H1 (cell line): ENCODE measurements at regions of chr3 and their contacts with region 1.

Region 1: DNA sequence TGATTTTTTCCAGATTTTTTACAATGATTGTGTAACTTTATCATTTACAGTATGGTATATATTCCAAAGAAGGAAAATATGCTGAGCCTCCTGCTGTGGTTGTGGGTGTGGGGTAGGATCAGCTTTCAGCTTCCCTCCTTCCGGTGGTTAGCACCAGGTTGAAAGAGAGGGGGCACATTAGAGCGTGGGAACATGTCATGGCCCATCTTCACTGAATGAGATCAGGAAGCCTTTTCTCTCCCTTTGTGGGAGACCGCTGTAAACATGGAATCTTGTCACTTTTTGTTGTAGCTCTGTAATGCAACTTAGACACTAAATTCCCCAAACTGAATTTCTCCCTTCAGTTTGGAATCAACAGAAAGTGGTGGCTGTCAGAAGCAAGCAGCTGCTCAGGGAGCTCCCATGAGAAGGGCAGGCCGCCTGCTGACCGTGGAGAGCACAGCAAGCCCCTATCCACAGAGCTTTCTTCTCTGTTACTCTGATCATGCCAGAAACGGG is 86.7 kb upstream of the LIMD1 start:
- DNase-seq: peak in 1 of 2 experiments; percentile 61
- H3K4me3 ChIP-seq: peak overlapping the region in 1 of 4 experiments; percentile 3; a peak in 1 of 8 replicates
- H3K27ac ChIP-seq: peak overlapping the region; percentile 37; the same call in 1 of the 2 replicates
- H3K4me1 ChIP-seq: peaks cover 11 to 32% (median 22%) of the 10 kb centered on the region in 4 experiments; a peak in 6 of 7 replicates
- H3K27me3 ChIP-seq: no peaks in the 10 kb centered on the region
- CTCF ChIP-seq: peak; percentile 39 to 55 (median 54)
- EP300 ChIP-seq: no peak
- POLR2A ChIP-seq: no peak
- RAD21 ChIP-seq: peak; percentile 22 to 47; a peak in 3 of 4 replicates

Region 2: DNA sequence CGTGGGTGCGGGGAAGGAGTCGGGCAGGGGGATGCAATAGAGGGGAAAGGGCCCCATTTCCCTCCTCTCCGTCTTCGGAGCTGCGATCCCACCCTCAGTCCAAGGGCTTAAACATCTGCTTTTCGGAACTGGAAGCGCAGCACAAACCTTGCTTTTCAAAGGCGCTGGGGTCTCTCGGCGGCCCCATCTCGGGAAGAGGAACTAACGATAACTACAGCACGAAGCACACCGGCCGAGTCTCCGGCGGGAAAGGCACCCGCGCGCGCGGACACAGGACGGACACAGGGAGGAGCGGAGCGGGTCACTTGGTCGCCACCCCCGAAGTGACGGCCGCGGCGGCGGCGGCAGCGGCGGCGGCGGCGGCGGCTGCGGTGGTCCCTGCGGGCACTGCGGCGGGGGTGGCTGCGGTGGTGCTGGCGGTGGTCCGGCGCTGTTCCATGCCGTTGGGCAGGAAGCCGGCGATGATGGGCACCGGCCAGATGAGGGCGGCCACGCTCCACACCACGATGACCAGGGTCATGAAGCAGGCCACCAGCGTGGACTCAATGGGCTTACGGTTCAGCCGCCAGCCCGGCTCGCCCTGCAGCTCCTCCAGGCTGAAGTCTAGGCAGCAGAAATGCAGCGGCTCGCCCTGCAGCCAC is 282.9 kb before region 1 on chr3:
- CTCF ChIA-PET with region 1: interaction called, 34 read pairs
- POLR2A ChIA-PET with region 1: interaction called, 3 read pairs
- DNase-seq: peak; percentile 31 to 81
- H3K4me3 ChIP-seq: peak overlapping the region; percentile 44 to 95 (median 76)
- H3K27ac ChIP-seq: no peak overlapping the region
- H3K4me1 ChIP-seq: peaks cover 1 to 15% (median 4%) of the 10 kb centered on the region in 4 experiments; a peak in 6 of 7 replicates
- H3K27me3 ChIP-seq: peaks cover 0 to 5% (median 0%) of the 10 kb centered on the region in 4 experiments; a peak in 2 of 7 replicates
- CTCF ChIP-seq: peak; percentile 77 to 90 (median 84)
- EP300 ChIP-seq: no peak
- POLR2A ChIP-seq: no peak
- RAD21 ChIP-seq: peak; percentile 89

Region 3: DNA sequence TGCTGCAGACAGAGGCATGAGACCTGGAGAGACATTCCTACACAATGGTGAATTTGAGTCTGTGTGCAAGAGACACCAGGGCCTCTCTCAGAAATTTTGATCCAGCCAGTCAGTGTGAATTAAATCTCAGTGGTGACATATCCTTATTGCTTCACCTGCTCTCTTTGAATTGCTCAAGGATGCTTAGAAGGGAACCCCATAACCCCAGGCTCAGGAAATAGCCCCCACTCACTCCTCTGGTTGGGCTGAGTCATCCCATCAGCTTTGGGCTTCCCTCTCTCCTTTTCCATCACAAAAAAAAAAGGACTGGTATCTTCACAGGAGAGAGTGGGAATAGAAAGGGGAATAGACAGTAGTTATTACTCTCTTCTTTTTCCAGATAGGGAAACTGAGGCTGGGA is 152.5 kb before region 1 on chr3:
- CTCF ChIA-PET with region 1: no interaction called
- POLR2A ChIA-PET with region 1: no interaction called
- DNase-seq: no peak
- H3K4me3 ChIP-seq: no peak overlapping the region
- H3K27ac ChIP-seq: no peak overlapping the region
- H3K4me1 ChIP-seq: no peaks in the 10 kb centered on the region
- H3K27me3 ChIP-seq: no peaks in the 10 kb centered on the region
- CTCF ChIP-seq: no peak
- EP300 ChIP-seq: no peak
- POLR2A ChIP-seq: no peak
- RAD21 ChIP-seq: no peak

Region 4: GRCh38 chr3:45453839-45454238 is 54.0 kb before region 1 on chr3:
- CTCF ChIA-PET with region 1: no interaction called
- POLR2A ChIA-PET with region 1: no interaction called
- DNase-seq: no peak
- H3K4me3 ChIP-seq: no peak overlapping the region
- H3K27ac ChIP-seq: no peak overlapping the region
- H3K4me1 ChIP-seq: no peaks in the 10 kb centered on the region
- H3K27me3 ChIP-seq: no peaks in the 10 kb centered on the region
- CTCF ChIP-seq: no peak
- EP300 ChIP-seq: no peak
- POLR2A ChIP-seq: no peak
- RAD21 ChIP-seq: no peak

Region 5: DNA sequence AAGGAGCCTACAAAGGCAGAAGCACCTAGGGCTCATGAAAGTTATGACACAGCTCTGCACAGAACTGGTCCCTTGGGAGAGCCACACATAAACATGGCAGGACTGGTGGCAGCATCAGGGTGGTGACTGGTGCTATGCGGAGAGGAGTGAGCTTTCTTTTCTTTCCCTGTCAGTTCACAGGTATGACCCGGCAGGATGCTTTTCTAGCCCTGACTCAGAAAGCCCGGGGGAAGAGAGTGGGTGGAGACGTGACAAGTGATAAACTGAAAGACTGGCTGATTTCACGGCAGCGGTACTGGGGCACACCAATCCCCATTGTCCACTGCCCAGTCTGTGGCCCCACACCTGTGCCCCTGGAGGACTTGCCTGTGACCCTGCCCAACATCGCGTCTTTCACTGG is 16.5 kb before region 1 on chr3:
- CTCF ChIA-PET with region 1: interaction called, 18 read pairs
- POLR2A ChIA-PET with region 1: no interaction called
- DNase-seq: no peak
- H3K4me3 ChIP-seq: no peak overlapping the region
- H3K27ac ChIP-seq: no peak overlapping the region
- H3K4me1 ChIP-seq: no peaks in the 10 kb centered on the region
- H3K27me3 ChIP-seq: no peaks in the 10 kb centered on the region
- CTCF ChIP-seq: no peak
- EP300 ChIP-seq: no peak
- POLR2A ChIP-seq: no peak
- RAD21 ChIP-seq: no peak

Region 6: DNA sequence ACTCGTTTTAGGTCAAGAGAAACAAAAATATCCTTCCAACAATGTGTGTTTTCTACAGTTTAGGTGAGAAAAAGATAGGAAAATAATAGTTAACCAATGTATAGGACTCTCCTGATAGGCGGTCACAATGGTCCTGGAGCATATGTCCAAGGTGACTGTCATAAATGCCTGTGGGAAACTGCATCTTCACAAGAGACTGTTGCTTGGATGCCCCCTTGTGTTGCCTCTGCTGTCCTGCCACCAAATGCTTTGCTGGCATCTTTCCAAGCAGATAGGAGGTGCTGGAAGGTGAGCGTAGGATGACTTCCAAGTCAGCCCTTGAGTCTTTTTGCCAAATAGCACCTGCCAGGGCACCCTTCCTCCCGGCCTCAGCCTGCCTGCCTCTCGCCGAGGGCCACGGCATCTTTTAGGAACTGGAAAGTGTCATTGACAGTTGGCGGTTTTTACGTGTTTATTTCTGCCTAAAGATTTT is 157.3 kb after region 1 on chr3:
- CTCF ChIA-PET with region 1: interaction called, 65 read pairs
- POLR2A ChIA-PET with region 1: interaction called, 3 read pairs
- DNase-seq: no peak
- H3K4me3 ChIP-seq: no peak overlapping the region
- H3K27ac ChIP-seq: no peak overlapping the region
- H3K4me1 ChIP-seq: no peaks in the 10 kb centered on the region
- H3K27me3 ChIP-seq: no peaks in the 10 kb centered on the region
- CTCF ChIP-seq: peak; percentile 94 to 99 (median 99)
- EP300 ChIP-seq: no peak
- POLR2A ChIP-seq: no peak
- RAD21 ChIP-seq: peak; percentile 69 to 79